ENCODE measurements at regions of chr19 and their contacts with region 1.

Region 1: DNA sequence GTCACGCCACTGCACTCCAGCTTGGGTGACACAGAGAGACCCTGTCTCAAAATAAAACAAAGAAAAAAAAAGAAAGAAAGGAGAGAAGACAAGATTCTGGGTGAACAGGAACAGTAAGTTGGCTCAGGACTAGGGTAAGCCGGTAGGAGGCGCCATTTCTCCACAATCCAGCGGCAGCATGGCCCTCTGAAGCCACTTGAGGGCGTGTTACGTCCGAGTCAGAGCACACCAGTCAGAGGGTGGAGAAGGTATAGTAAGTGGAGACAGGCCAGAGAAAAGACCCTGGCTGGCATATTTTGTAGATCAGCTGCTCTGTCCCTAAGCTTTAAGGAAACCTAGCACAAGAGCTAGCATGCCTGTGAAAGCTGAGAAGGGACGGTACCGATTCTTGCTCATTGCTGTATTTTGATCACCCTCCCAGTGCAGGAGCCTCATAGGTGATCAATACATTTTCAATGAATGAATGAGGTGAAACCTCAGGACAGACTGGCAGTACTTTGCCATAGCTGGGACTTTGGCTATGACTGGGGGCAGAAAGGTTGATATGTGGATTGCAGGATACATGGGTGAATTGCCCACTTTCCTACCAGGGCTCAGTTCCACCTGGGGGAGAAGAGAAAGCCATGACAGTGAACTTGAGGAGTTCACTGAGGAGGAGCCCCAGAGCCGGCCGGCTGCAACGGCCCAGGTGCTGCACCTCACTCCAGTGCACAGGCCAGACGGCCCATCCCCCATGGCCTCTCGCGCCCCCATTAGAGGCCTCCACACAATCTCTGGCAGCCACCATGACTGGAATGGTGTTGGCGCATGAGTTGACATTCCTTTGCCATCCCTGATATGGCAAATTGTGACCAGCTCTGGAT is 23.5 kb downstream of the POU2F2 start:
- DNase-seq: peak; percentile 82
- H3K4me3 Mint-ChIP-seq: no peak overlapping the region
- H3K27ac Mint-ChIP-seq: peak overlapping the region; percentile 42
- H3K4me1 Mint-ChIP-seq: peaks cover 43% of the 10 kb centered on the region
- H3K27me3 Mint-ChIP-seq: no peaks in the 10 kb centered on the region

Region 2: GRCh38 chr19:42010245-42011126 is 98.3 kb before region 1 on chr19:
- intact Hi-C with region 1: no loop called
- DNase-seq: no peak
- H3K4me3 Mint-ChIP-seq: no peak overlapping the region
- H3K27ac Mint-ChIP-seq: no peak overlapping the region
- H3K4me1 Mint-ChIP-seq: no peaks in the 10 kb centered on the region
- H3K27me3 Mint-ChIP-seq: no peaks in the 10 kb centered on the region

Region 3: GRCh38 chr19:42028304-42029216 is 80.2 kb before region 1 on chr19:
- intact Hi-C with region 1: no loop called
- DNase-seq: no peak
- H3K4me3 Mint-ChIP-seq: no peak overlapping the region
- H3K27ac Mint-ChIP-seq: no peak overlapping the region
- H3K4me1 Mint-ChIP-seq: no peaks in the 10 kb centered on the region
- H3K27me3 Mint-ChIP-seq: peaks cover 9% of the 10 kb centered on the region

Region 4: GRCh38 chr19:42132851-42133528 is 24.2 kb after region 1 on chr19:
- intact Hi-C with region 1: loop called (anchors 1 kb)
- DNase-seq: peak; percentile 85
- H3K4me3 Mint-ChIP-seq: peak overlapping the region; percentile 93
- H3K27ac Mint-ChIP-seq: peak overlapping the region; percentile 91
- H3K4me1 Mint-ChIP-seq: peaks cover 61% of the 10 kb centered on the region
- H3K27me3 Mint-ChIP-seq: no peaks in the 10 kb centered on the region

Region 5: GRCh38 chr19:42184401-42184861 is 75.7 kb after region 1 on chr19:
- intact Hi-C with region 1: loop called (anchors 1 kb)
- DNase-seq: peak; percentile 56
- H3K4me3 Mint-ChIP-seq: peak overlapping the region; percentile 19
- H3K27ac Mint-ChIP-seq: peak overlapping the region; percentile 54
- H3K4me1 Mint-ChIP-seq: peaks cover 45% of the 10 kb centered on the region
- H3K27me3 Mint-ChIP-seq: peaks cover 15% of the 10 kb centered on the region

Region 6: GRCh38 chr19:42283143-42284065 is 174.6 kb after region 1 on chr19:
- intact Hi-C with region 1: loop called (anchors 1 kb)
- DNase-seq: peak; percentile 92
- H3K4me3 Mint-ChIP-seq: no peak overlapping the region
- H3K27ac Mint-ChIP-seq: no peak overlapping the region
- H3K4me1 Mint-ChIP-seq: peaks cover 47% of the 10 kb centered on the region
- H3K27me3 Mint-ChIP-seq: no peaks in the 10 kb centered on the region

Region 7: GRCh38 chr19:42325273-42325895 is 216.6 kb after region 1 on chr19 and contains the start of gene MEGF8:
- intact Hi-C with region 1: loop called (anchors 1 kb)
- DNase-seq: peak; percentile 98
- H3K4me3 Mint-ChIP-seq: peak within 1 kb of the TSS; percentile 90
- H3K27ac Mint-ChIP-seq: peak within 1 kb of the TSS; percentile 53
- H3K4me1 Mint-ChIP-seq: peaks cover 15% of the 10 kb centered on the region
- H3K27me3 Mint-ChIP-seq: peaks cover 32% of the 10 kb centered on the region
- total RNA-seq, gene MEGF8: 7.5 and 7.8 TPM in 2 replicates

Region 8: DNA sequence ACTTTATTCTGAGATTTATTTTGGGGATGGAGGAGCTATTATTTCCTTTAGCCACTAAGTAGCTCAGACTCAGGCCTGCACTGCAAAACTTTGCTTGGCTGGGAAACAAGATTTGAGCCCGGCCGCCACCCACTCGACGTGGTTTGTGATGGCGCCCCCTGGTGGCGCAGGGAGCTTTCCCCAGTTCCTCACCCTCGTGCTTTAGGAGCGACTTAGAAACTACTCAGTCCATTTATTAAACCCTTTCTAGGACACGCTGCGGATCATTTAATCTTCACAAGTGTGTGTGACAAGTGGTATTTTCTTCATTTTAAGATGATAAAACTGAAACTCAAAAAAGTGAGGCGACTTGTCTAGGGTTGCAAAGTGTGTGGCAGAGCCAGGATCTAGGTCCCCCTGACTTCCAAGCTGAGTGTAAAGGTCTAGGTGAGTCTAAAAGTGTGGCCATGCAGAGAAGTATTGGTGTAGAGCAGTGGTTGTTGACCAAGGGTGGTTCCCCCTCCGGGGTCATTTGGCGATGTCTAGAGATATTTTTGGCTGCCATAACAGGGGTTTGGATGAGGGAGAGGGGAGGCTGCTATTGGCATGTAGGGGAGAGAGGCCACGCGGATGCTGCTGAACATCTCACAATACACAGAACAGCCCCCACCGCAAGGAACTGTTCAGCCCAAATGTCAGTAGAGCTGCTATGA is 331.7 kb after region 1 on chr19:
- intact Hi-C with region 1: loop called (anchors 1 kb)
- DNase-seq: peak; percentile 68
- H3K4me3 Mint-ChIP-seq: no peak overlapping the region
- H3K27ac Mint-ChIP-seq: peak overlapping the region; percentile 4
- H3K4me1 Mint-ChIP-seq: peaks cover 24% of the 10 kb centered on the region
- H3K27me3 Mint-ChIP-seq: no peaks in the 10 kb centered on the region